ENCODE measurements at regions of chr14 and their contacts with region 1.

Region 1: GRCh38 chr14:32076278-32077080 is 625 bp upstream of the ARHGAP5 start:
- DNase-seq: peak; percentile 97
- H3K4me3 Mint-ChIP-seq: peak overlapping the region; percentile 84
- H3K27ac Mint-ChIP-seq: peak overlapping the region; percentile 86
- H3K4me1 Mint-ChIP-seq: peaks cover 21% of the 10 kb centered on the region
- H3K27me3 Mint-ChIP-seq: no peaks in the 10 kb centered on the region
- CTCF ChIP-seq: no peak

Region 2: DNA sequence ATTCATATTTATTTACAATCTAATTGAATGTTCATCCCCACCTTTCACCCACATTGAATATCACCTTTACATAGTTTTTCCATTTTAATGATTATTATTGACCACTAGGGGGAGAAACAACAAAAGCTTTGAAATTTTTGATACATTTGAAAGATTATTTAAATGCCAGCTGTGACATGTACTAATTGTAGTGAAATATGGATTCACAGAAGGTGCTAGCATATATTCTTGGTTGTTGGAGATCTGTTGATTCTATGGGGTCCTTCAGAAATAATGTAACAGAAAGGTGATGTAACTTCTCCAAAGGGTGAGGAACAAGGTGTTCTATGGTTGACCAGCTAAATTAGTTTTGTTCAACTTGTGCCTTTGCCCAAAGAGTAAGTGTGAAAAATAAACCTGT is 566.3 kb before region 1 on chr14:
- CTCF ChIA-PET with region 1: interaction called, 3 read pairs
- intact Hi-C with region 1: loop called (anchors 10 kb)
- DNase-seq: no peak
- H3K4me3 Mint-ChIP-seq: no peak overlapping the region
- H3K27ac Mint-ChIP-seq: no peak overlapping the region
- H3K4me1 Mint-ChIP-seq: no peaks in the 10 kb centered on the region
- H3K27me3 Mint-ChIP-seq: no peaks in the 10 kb centered on the region
- CTCF ChIP-seq: no peak

Region 3: GRCh38 chr14:31668348-31668747 is 408.1 kb before region 1 on chr14:
- CTCF ChIA-PET with region 1: no interaction called
- intact Hi-C with region 1: no loop called
- DNase-seq: no peak
- H3K4me3 Mint-ChIP-seq: no peak overlapping the region
- H3K27ac Mint-ChIP-seq: no peak overlapping the region
- H3K4me1 Mint-ChIP-seq: no peaks in the 10 kb centered on the region
- H3K27me3 Mint-ChIP-seq: no peaks in the 10 kb centered on the region
- CTCF ChIP-seq: no peak

Region 4: GRCh38 chr14:32009976-32010863 is 66.3 kb before region 1 on chr14:
- CTCF ChIA-PET with region 1: no interaction called
- intact Hi-C with region 1: loop called (anchors 1 kb)
- DNase-seq: no peak
- H3K4me3 Mint-ChIP-seq: no peak overlapping the region
- H3K27ac Mint-ChIP-seq: peak overlapping the region; percentile 7
- H3K4me1 Mint-ChIP-seq: peaks cover 68% of the 10 kb centered on the region
- H3K27me3 Mint-ChIP-seq: no peaks in the 10 kb centered on the region
- CTCF ChIP-seq: no peak

Region 5: GRCh38 chr14:32202998-32203882 is 126.8 kb after region 1 on chr14 and contains the start of gene RNU6-8:
- CTCF ChIA-PET with region 1: no interaction called
- intact Hi-C with region 1: loop called (anchors 2 kb)
- DNase-seq: peak; percentile 90
- H3K4me3 Mint-ChIP-seq: peak within 1 kb of the TSS; percentile 94
- H3K27ac Mint-ChIP-seq: peak within 1 kb of the TSS; percentile 99
- H3K4me1 Mint-ChIP-seq: peaks cover 12% of the 10 kb centered on the region
- H3K27me3 Mint-ChIP-seq: no peaks in the 10 kb centered on the region
- CTCF ChIP-seq: no peak
- total RNA-seq, gene RNU6-8: not detected in 2 replicates

Region 6: DNA sequence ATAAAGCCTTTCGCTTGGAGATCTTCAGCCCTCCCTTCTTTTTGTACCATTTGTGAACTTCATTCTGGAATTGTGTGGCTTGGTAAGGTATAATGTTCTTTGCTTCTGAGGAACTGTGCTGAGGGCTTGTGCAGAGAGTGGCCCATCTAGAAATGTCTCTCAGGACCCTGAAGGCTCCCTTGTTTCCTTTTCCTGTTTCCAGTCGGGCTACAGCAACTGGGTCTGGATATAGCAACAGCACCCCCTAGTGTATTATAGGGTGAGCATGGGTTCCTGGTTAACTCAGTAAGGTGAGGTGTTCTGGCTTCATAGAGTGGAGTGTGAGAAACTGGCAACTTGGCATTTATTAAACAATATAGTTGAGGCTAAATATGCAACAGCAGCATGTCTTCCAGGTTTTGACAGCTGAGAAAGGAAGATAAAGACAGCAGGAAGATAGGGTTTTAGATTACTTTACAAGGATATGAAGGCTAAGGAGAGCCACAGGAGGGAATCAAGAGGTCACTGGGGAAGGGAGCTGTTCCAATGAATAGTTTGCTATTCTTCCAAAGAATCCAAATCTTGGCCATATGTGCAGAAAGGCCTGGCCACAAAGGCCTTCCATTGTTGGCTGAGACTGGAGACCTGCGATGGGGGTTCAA is 175.7 kb after region 1 on chr14:
- CTCF ChIA-PET with region 1: interaction called, 4 read pairs
- intact Hi-C with region 1: loop called (anchors 1 kb)
- DNase-seq: peak; percentile 65
- H3K4me3 Mint-ChIP-seq: no peak overlapping the region
- H3K27ac Mint-ChIP-seq: no peak overlapping the region
- H3K4me1 Mint-ChIP-seq: no peaks in the 10 kb centered on the region
- H3K27me3 Mint-ChIP-seq: no peaks in the 10 kb centered on the region
- CTCF ChIP-seq: peak; percentile 58

Region 7: GRCh38 chr14:32469388-32470160 is 393.1 kb after region 1 on chr14:
- CTCF ChIA-PET with region 1: interaction called, 4 read pairs
- intact Hi-C with region 1: loop called (anchors 10 kb)
- DNase-seq: no peak
- H3K4me3 Mint-ChIP-seq: no peak overlapping the region
- H3K27ac Mint-ChIP-seq: peak overlapping the region; percentile 60
- H3K4me1 Mint-ChIP-seq: peaks cover 41% of the 10 kb centered on the region
- H3K27me3 Mint-ChIP-seq: no peaks in the 10 kb centered on the region
- CTCF ChIP-seq: no peak